WTC11 (cell line): ENCODE measurements at regions of chr9 and their contacts with region 1.

Region 1: DNA sequence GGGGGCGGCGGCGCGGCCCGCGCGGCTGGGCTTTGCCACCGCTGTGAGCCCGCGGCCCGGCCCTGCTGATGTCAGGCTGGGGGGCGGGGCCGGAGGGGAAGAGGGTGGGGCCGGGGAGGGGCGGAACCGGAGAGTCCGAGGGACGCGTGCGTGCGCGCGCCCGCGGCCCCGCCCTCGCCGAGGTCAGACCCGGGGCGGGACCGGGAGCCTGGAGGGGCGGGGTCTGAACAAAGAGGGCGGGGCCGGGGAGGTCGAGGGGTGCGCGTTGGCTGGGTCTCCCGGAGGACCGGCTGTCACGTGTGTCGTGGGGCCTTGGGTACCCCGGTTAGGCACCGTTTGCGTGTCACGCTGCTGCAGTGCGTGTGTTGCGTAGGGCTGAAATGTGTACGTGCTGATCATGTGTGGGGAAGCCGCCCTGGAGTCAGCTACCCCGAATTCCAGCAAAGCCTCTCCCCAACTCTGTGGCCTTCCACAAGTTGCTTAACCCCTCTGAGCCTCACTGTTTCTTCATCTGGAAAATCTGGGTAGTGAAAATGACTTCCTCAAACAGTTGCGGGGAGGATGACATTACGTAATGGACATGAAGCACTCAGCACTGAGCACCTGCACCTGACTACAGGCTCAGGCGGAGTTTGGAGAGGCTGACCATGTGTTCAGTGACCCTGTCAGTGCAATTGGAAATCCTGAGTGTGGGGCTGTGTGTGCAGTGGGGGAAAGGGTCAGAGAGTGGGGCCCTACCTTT is at the start of gene RALGDS:
- DNase-seq: peak; percentile 87
- ATAC-seq: peak; percentile 80
- H3K4me3 Mint-ChIP-seq: peak within 1 kb of the TSS; percentile 75
- H3K27ac Mint-ChIP-seq: no peak within 1 kb of the TSS
- H3K4me1 Mint-ChIP-seq: peaks cover 12% of the 10 kb centered on the region
- H3K27me3 Mint-ChIP-seq: peaks cover 58% of the 10 kb centered on the region
- CTCF ChIP-seq: no peak
- total RNA-seq, gene RALGDS: 19.5 to 23.2 TPM (median 22.9 TPM) in 3 replicates

Region 2: DNA sequence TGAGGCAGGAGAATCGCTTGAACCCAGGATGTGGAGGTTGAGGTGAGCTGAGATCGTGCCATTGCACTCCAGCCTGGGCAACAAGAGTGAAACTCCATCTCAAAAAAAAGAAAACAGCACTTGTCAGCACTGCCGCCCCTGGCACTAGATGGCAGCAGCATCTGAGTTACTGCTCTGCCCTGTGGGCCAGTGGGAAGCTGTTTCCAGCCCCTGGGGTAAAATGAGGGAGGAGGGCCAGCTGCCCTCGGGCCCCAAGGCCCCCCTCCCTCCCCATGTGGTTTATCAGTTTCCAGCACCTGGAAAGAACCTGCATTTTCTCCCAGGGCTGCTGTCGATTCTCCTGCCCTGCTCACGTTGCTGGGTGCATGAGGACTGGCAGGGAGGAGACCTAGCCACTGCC is 72.8 kb before region 1 on chr9:
- CTCF ChIA-PET with region 1: interaction called, 12 read pairs
- POLR2A ChIA-PET with region 1: no interaction called
- DNase-seq: peak; percentile 43
- ATAC-seq: peak; percentile 87
- H3K4me3 Mint-ChIP-seq: no peak overlapping the region
- H3K27ac Mint-ChIP-seq: no peak overlapping the region
- H3K4me1 Mint-ChIP-seq: no peaks in the 10 kb centered on the region
- H3K27me3 Mint-ChIP-seq: no peaks in the 10 kb centered on the region
- CTCF ChIP-seq: no peak